ENCODE measurements at regions of chr12 and their contacts with region 1.

Region 1: GRCh38 chr12:26274441-26275312 is 79.3 kb downstream of the SSPN start:
- DNase-seq: peak; percentile 90

Region 2: GRCh38 chr12:26162905-26163304 is 111.8 kb before region 1 on chr12:
- intact Hi-C with region 1: no loop called
- DNase-seq: no peak

Region 3: DNA sequence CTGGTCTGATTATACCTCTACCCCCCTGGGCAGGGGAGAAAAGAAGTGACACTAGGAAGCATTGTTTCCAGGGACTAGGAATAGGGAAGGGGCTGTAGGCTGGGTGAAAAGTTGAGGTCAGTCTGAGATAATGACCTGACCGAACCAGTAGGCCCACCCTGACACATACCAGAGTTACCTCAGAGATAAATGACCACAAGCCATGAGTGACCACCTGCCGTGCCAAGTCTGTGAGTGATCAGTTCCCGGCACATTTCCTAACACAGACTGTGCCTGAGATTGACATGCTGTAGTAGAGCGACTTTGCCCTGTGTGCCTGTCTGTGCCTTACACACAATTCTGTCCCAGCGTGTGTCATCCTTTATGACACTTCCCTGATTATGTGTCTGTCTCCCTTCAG is 89.2 kb before region 1 on chr12:
- intact Hi-C with region 1: no loop called
- DNase-seq: no peak

Region 4: GRCh38 chr12:26195641-26196420 is 78.8 kb before region 1 on chr12:
- intact Hi-C with region 1: loop called (anchors 5 kb)
- DNase-seq: peak; percentile 80

Region 5: DNA sequence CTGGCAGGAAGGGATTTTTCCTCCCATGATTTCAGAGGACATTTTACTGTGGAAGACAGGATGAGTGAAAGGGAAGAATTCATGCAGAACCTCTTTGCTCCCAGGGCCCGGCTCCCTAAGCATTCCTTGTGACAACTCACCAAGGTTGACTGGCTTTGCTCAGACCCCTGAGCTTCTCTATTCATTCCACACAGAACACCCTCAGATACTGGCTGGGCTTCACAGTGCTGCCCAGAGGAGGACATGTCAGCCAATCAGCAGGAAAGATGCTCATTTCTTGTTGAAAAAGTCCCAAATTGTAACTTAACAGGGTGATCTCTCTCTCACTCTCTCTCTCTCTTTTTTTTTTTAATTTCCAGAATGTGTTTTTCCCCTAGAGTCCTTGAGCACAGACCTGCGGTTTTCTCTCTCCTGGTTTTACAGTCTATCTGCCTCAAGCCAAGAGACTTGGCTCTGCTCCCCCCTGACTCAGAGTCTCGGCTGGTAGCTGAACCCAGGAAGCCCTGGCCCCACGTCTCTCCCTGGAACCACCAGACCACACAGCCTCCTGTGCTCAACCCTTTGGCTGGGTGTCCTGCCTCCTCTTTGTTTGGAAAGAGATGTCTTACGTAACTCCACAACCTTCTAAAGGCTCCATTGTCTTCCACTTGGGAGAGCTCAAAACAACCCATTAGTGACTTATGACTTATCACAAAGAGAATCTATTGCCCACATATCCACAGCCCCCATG is 35.4 kb before region 1 on chr12:
- intact Hi-C with region 1: loop called (anchors 1 kb)
- DNase-seq: peak; percentile 84

Region 6: DNA sequence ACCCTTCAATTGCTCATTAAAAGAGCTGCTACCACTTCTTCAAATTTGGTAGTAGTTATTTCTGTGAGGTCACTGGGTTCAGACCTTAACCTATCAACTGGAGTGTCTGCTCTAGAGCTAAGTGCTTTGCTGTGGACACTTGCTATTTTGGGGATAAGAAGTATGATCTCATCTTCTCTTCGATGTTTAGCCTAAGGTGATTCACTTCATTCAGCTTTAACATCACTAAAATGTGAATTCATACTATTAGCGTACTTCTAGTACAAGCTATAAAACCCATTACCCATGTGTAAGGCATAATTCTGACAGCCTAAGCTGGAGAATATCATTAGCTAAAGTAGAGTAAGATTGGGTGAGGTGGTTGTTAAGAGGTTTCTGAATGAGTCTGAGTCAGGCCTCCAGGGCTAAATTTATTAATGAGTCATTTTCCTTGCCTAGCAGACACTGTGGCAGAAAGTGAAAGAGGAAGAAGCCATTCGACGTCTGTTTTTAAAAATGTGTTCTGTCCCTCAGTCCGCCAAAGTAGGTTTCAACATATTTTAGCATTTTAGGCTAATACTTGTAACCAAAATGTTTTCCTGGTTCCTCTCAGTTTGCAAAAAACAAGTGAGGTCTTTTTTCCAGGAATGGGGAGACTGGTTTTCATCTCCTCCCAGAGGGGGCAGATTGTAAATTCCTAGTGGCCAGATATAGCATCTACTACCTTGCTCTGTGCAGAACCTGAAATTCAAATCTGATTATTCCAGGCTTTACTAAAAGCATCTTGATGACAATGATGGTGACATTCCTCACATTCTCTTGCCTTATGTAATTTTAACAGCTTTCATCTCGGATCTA is 24.3 kb after region 1 on chr12:
- intact Hi-C with region 1: no loop called
- DNase-seq: no peak

Region 7: GRCh38 chr12:26918309-26919215 is 643.9 kb after region 1 on chr12:
- intact Hi-C with region 1: no loop called
- DNase-seq: no peak

Measured in cardiac septum (tissue), 1 donor.